ENCODE measurements at regions of chr13 and their contacts with region 1.

Region 1: DNA sequence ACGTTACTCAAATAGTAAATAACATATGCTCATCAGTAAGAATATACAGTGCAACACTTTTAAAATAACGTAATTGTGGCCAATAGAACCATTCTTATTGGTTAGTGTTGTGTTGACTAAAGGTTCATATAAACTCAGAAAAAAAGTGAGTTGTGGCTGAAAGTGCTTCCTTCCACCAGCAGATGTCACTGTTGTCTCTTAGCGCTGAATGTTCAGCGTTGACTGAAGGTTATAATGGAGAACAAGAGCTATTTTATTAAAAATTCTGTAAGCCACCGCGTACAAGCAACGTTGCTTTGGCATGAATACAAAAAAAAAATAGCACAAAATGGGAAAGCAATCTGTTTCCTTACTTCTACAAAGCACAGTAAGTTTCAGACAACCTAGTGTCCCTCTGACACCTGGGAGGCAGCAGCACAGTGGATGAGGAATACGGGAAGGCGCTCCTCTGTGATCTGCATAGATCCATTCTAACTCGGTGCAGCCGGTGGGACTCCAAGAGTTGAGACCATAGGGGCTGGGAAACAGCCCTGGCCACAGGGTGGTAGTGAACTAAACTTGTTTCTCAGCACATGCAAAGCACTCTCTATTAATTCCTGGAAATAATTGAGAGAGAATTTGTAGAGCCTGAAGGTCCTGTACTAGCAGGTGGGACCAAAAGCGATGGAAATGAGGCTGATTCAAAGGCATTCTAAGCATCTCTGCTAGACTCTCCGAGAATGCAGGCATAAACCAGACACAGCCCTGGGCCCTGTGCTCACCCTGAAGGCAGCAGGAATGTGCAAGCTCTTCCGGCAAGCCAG is 24.0 kb upstream of the OXGR1 start:
- DNase-seq: peak in 1 of 2 experiments; percentile 58
- H3K4me3 ChIP-seq: peak overlapping the region in 2 of 4 experiments; percentile 4 to 44; a peak in 3 of 8 replicates
- H3K27ac ChIP-seq: no peak overlapping the region
- H3K4me1 ChIP-seq: 0 out of 7 replicates have a peak, but pooled peaks cover 0 to 3% (median 0%) of the 10 kb centered on the region in 4 experiments
- H3K27me3 ChIP-seq: no peaks in the 10 kb centered on the region
- CTCF ChIP-seq: peak in 2 of 3 experiments; percentile 62 to 78; a peak in 3 of 4 replicates
- EP300 ChIP-seq: no peak
- POLR2A ChIP-seq: no peak
- RAD21 ChIP-seq: peak; percentile 74 to 76

Region 2: GRCh38 chr13:96925916-96926628 is 92.2 kb before region 1 on chr13:
- CTCF ChIA-PET with region 1: no interaction called
- POLR2A ChIA-PET with region 1: no interaction called
- DNase-seq: no peak
- H3K4me3 ChIP-seq: no peak overlapping the region
- H3K27ac ChIP-seq: no peak overlapping the region
- H3K4me1 ChIP-seq: no peaks in the 10 kb centered on the region
- H3K27me3 ChIP-seq: no peaks in the 10 kb centered on the region
- CTCF ChIP-seq: no peak
- EP300 ChIP-seq: no peak
- POLR2A ChIP-seq: no peak
- RAD21 ChIP-seq: no peak

Region 3: GRCh38 chr13:96984051-96984508 is 34.1 kb before region 1 on chr13:
- CTCF ChIA-PET with region 1: interaction called, 16 read pairs
- POLR2A ChIA-PET with region 1: no interaction called
- DNase-seq: no peak
- H3K4me3 ChIP-seq: peak overlapping the region in 1 of 4 experiments; percentile 32; a peak in 1 of 8 replicates
- H3K27ac ChIP-seq: no peak overlapping the region
- H3K4me1 ChIP-seq: no peaks in the 10 kb centered on the region; a peak in 1 of 7 replicates
- H3K27me3 ChIP-seq: no peaks in the 10 kb centered on the region
- CTCF ChIP-seq: peak in 2 of 3 experiments; percentile 11 to 21; a peak in 2 of 4 replicates
- EP300 ChIP-seq: no peak
- POLR2A ChIP-seq: no peak
- RAD21 ChIP-seq: 0 out of 4 replicates have a peak, but pooled peaks of 1 of the 2 experiments have one; percentile 9

Region 4: DNA sequence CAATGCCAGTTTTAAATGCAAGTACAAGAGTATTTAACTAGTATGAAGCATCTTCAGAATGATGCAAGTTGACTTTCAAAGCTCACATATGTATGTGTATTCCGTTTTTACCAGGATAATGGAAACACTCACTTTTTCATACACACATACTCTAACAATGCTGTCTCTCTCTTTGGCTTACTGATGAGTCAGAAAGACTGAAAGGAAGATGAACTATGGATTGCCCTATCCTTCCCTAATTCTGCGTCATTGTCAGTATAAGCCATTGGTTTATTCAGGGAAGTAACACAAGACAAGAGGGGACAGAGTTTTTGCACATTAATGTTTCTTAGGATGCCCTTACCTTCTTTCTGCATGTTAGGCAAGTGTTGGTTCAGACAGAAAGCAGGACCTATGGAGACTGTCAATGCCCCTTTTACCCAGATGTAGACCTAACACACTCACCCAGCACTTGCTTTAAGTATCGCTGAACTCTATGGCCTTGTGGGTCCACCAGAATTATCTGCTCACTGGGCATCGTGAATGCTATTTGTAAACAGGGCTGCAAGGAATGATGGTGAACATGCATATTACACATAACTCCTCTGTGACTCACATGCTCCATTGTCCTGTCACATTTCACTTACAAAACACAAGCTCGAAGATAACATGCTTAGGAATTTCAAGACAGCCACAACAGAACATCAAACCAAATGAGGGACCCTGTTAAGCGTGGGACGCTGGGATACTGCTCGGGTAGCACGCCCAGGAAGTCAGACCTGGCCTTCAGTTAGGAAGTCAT is 13.9 kb before region 1 on chr13:
- CTCF ChIA-PET with region 1: interaction called, 14 read pairs
- POLR2A ChIA-PET with region 1: no interaction called
- DNase-seq: no peak
- H3K4me3 ChIP-seq: no peak overlapping the region
- H3K27ac ChIP-seq: no peak overlapping the region
- H3K4me1 ChIP-seq: peaks cover 0 to 3% (median 0%) of the 10 kb centered on the region in 4 experiments; a peak in 1 of 7 replicates
- H3K27me3 ChIP-seq: peaks cover 27 to 38% (median 30%) of the 10 kb centered on the region in 4 experiments
- CTCF ChIP-seq: no peak
- EP300 ChIP-seq: no peak
- POLR2A ChIP-seq: no peak
- RAD21 ChIP-seq: no peak

Region 5: GRCh38 chr13:97067017-97067895 is 49.0 kb after region 1 on chr13:
- CTCF ChIA-PET with region 1: no interaction called
- POLR2A ChIA-PET with region 1: no interaction called
- DNase-seq: no peak
- H3K4me3 ChIP-seq: no peak overlapping the region
- H3K27ac ChIP-seq: no peak overlapping the region
- H3K4me1 ChIP-seq: peaks cover 0 to 7% (median 5%) of the 10 kb centered on the region in 4 experiments; a peak in 4 of 7 replicates
- H3K27me3 ChIP-seq: no peaks in the 10 kb centered on the region
- CTCF ChIP-seq: peak in 1 of 3 experiments; percentile 18; a peak in 1 of 4 replicates
- EP300 ChIP-seq: no peak
- POLR2A ChIP-seq: no peak
- RAD21 ChIP-seq: no peak

Measured in H1 (cell line).